HCT116 (cell line): ENCODE measurements at regions of chr14 and their contacts with region 1.

Region 1: DNA sequence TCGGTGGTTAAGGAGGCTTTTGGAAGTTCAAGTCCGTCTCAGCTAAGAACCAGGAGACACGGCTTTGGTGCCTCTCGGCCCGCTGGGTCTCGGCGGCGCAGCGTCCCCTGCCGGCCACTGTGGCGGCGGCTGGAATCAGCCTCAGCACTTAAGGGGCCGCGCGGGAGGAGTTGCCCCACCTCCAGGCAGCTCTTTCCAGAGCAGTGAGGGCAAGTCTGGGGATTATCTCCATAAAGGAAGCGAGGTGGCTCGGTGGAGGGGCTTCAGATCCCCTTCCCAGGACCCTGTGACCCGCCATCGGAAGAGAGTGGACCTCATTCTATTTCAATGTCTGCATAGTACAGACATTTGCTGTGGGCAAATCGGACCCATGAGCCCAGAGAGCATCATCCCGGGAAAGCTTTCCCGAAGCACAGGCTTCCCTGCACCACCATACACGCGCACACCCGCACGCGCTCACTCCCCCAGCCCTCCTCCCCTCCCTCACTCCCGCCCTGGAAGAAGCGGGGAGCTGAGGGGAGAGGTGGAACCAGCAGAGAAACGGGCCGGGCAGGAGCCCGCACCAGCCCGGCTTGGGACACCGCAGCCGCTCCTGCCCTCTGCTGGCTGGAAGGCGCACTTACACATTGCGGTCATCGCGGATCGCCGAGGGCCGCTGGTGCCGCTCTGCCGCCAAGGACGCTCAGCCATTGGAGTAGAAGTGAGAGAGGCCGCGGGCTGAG is 15.9 kb downstream of the RNASE2 start:
- DNase-seq: peak; percentile 65
- ATAC-seq: peak; percentile 91
- H3K4me3 ChIP-seq: peak overlapping the region; percentile 61 to 63
- H3K27ac ChIP-seq: peak overlapping the region; percentile 39
- H3K4me1 ChIP-seq: peaks cover 10 to 30% of the 10 kb centered on the region in 2 experiments
- H3K27me3 ChIP-seq: no peaks in the 10 kb centered on the region
- CTCF ChIP-seq: peak; percentile 74 to 98 (median 95)
- POLR2A ChIP-seq: no peak
- RAD21 ChIP-seq: peak; percentile 56

Region 2: DNA sequence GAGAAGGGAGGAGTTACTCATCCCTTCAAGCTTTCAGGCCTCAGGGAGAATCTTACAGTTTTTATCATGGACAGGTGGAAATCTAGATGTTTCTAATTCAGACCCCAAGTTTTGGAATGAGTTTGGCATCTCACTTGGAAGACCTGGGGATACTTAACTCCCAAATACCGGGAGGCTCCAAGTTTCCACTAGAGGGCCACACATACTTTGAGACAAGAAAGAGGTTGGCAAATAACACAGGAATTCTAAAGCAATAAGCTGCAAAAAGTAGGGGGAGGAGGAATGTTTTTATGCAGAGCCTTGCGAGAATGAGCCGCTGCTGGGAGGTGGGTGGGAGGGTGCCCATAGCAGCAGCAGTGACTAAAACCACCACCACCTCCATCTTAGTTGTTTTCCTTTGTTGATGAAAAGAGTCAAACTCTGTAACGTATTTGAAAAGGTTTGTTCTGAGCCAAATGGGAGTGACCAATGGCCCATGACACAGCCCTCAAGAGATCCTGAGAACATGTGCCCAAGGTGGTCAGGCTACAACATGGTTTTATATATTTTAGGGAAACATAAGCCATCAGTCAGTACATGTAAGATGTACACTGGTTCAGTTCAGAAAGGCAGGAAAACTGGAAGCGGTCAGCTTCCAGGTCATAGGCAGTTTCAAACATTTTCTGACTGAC is 134.3 kb before region 1 on chr14:
- CTCF ChIA-PET with region 1: interaction called, 10 read pairs
- POLR2A ChIA-PET with region 1: no interaction called
- RAD21 ChIA-PET with region 1: no interaction called
- intact Hi-C with region 1: no loop called
- DNase-seq: peak; percentile 66
- ATAC-seq: peak; percentile 88
- H3K4me3 ChIP-seq: no peak overlapping the region
- H3K27ac ChIP-seq: no peak overlapping the region
- H3K4me1 ChIP-seq: peaks cover 0 to 10% of the 10 kb centered on the region in 2 experiments; a peak in 2 of 4 replicates
- H3K27me3 ChIP-seq: no peaks in the 10 kb centered on the region
- CTCF ChIP-seq: peak; percentile 49 to 77 (median 72); a peak in 5 of 6 replicates
- POLR2A ChIP-seq: no peak
- RAD21 ChIP-seq: peak; percentile 65

Region 3: GRCh38 chr14:20855652-20856291 is 115.4 kb before region 1 on chr14:
- CTCF ChIA-PET with region 1: interaction called, 24 read pairs
- POLR2A ChIA-PET with region 1: no interaction called
- RAD21 ChIA-PET with region 1: interaction called, 3 read pairs
- intact Hi-C with region 1: loop called (anchors 2 kb)
- DNase-seq: peak; percentile 73
- ATAC-seq: peak; percentile 96
- H3K4me3 ChIP-seq: no peak overlapping the region
- H3K27ac ChIP-seq: no peak overlapping the region
- H3K4me1 ChIP-seq: peaks cover 3 to 5% of the 10 kb centered on the region in 2 experiments; a peak in 2 of 4 replicates
- H3K27me3 ChIP-seq: peaks cover 16% of the 10 kb centered on the region; the same call in 1 of the 2 replicates
- CTCF ChIP-seq: peak; percentile 69 to 90 (median 79)
- POLR2A ChIP-seq: no peak
- RAD21 ChIP-seq: peak; percentile 86

Region 4: GRCh38 chr14:20873370-20874177 is 97.6 kb before region 1 on chr14:
- CTCF ChIA-PET with region 1: interaction called, 11 read pairs
- POLR2A ChIA-PET with region 1: no interaction called
- RAD21 ChIA-PET with region 1: no interaction called
- intact Hi-C with region 1: no loop called
- DNase-seq: peak; percentile 79
- ATAC-seq: peak; percentile 99
- H3K4me3 ChIP-seq: peak overlapping the region; percentile 42 to 47
- H3K27ac ChIP-seq: peak overlapping the region; percentile 18
- H3K4me1 ChIP-seq: peaks cover 0 to 14% of the 10 kb centered on the region in 2 experiments; a peak in 2 of 4 replicates
- H3K27me3 ChIP-seq: no peaks in the 10 kb centered on the region
- CTCF ChIP-seq: peak; percentile 65 to 94 (median 93)
- POLR2A ChIP-seq: peak; percentile 13
- RAD21 ChIP-seq: peak; percentile 74

Region 5: DNA sequence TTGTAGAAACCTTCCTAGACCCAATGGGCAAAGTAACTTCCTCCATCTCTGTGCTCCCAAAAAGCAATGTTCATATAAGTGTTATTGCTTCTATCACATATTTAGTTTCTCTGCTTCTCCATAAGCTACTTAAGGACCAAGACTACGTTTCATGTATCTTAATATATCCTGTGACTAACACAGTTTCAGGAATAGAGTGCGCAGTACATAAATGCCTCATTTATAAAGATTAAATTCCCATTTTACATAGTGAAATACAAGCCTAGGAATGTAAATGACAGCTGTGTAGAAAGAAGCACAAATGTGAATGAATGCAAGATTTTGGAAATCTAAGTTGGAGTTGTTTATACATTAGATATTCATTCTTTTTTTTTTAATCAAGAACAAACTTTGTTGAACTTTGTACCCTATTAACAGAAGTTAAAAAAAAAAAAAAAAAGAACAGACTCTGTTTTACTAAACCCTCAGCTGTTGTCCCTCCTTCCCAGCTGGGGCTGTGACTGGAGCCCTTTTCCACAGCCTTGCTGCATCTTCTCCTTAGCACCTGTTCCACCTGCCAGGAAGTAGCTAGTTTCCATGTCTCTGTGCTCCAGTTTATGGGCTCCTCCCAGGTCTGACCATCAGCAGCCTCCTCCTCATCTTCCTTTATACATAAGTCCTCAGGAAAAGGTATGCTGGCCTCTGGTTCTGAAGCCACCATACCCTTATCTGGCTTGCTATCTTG is 11.7 kb after region 1 on chr14:
- CTCF ChIA-PET with region 1: interaction called, 27 read pairs
- POLR2A ChIA-PET with region 1: no interaction called
- RAD21 ChIA-PET with region 1: no interaction called
- intact Hi-C with region 1: no loop called
- DNase-seq: no peak
- ATAC-seq: no peak
- H3K4me3 ChIP-seq: no peak overlapping the region
- H3K27ac ChIP-seq: no peak overlapping the region
- H3K4me1 ChIP-seq: peaks cover 5 to 16% of the 10 kb centered on the region in 2 experiments; a peak in 3 of 4 replicates
- H3K27me3 ChIP-seq: no peaks in the 10 kb centered on the region
- CTCF ChIP-seq: no peak
- POLR2A ChIP-seq: no peak
- RAD21 ChIP-seq: no peak